GM23248 (cell line): ENCODE measurements at regions of chrX and their contacts with region 1.

Region 1: DNA sequence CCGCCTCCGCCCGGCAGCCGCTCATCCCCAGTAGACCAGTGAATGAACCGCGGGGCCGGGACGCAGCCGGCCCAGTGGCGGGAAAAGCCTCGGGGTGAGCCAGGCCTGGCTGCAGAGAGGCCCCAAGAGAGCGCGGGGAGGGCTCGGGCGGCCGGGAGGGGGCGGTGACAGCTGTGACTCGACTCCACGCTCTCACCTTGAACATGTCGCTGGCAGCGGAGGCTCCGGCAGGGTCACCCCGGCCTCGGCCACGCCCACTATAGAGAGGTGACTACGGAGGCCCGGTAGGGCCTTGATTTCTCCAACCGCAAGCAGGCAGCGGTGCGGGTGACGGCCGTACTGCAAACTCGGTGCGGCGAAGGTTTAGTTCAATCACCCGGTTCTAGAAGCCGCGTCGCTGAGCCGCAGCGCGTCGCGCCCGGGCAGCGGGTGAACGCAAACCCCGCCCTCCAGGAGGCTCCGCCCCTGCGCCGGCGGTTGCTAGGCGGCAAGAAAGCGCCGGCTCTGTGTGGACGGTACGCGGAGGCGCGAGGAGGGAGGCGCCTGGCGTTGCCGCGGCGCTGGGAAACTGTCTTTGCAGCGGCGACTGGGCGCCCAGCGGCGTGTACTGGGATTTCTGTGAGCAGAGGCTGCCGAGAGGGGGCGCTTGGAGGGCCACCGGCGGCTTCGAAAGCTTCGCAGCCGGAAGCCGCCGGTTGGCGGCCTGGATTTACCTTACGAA is at the starts of genes APOO and CXorf58:
- DNase-seq: peak; percentile 95
- H3K4me3 ChIP-seq: peak within 1 kb of the TSS; percentile 90
- H3K27ac ChIP-seq: peak within 1 kb of the TSS; percentile 86
- H3K4me1 ChIP-seq: peaks cover 5% of the 10 kb centered on the region; the same call in 1 of the 2 replicates
- H3K27me3 ChIP-seq: no peaks in the 10 kb centered on the region
- total RNA-seq, gene APOO: 7.3 and 8.6 TPM in 2 replicates
- total RNA-seq, gene CXorf58: not detected in 2 replicates

Region 2: DNA sequence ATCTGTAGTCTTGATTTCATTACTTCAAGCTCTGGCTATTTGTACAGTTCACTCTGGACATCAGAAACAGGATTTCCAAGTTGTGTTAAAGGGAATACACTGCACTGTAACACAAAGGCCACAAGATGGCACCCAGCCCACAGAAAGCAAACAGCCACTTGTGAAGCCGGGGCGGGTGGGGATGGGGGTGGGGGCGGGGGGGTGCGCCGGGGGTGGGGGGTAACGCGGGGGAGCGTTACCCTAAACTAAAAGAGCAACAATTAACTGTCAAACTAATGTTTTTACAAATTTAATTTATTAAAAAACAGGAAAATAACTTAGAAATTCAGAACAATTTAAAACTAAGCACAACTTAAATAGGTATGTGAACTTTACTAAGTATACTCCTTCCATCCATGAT is 213.1 kb before region 1 on chrX:
- in situ Hi-C with region 1: loop called (anchors 10 kb)
- DNase-seq: peak; percentile 71
- H3K4me3 ChIP-seq: no peak overlapping the region
- H3K27ac ChIP-seq: no peak overlapping the region
- H3K4me1 ChIP-seq: no peaks in the 10 kb centered on the region
- H3K27me3 ChIP-seq: no peaks in the 10 kb centered on the region

Region 3: GRCh38 chrX:23782863-23783568 is 124.6 kb before region 1 on chrX and contains the start of gene SAT1:
- in situ Hi-C with region 1: loop called (anchors 10 kb)
- DNase-seq: peak; percentile 97
- H3K4me3 ChIP-seq: peak within 1 kb of the TSS; percentile 87
- H3K27ac ChIP-seq: peak within 1 kb of the TSS; percentile 99
- H3K4me1 ChIP-seq: peaks cover 26% of the 10 kb centered on the region
- H3K27me3 ChIP-seq: no peaks in the 10 kb centered on the region
- total RNA-seq, gene SAT1: 168 and 171 TPM in 2 replicates

Region 4: GRCh38 chrX:24063488-24063887 is 155.8 kb after region 1 on chrX:
- in situ Hi-C with region 1: no loop called
- DNase-seq: no peak
- H3K4me3 ChIP-seq: no peak overlapping the region
- H3K27ac ChIP-seq: no peak overlapping the region
- H3K4me1 ChIP-seq: no peaks in the 10 kb centered on the region
- H3K27me3 ChIP-seq: no peaks in the 10 kb centered on the region

Region 5: DNA sequence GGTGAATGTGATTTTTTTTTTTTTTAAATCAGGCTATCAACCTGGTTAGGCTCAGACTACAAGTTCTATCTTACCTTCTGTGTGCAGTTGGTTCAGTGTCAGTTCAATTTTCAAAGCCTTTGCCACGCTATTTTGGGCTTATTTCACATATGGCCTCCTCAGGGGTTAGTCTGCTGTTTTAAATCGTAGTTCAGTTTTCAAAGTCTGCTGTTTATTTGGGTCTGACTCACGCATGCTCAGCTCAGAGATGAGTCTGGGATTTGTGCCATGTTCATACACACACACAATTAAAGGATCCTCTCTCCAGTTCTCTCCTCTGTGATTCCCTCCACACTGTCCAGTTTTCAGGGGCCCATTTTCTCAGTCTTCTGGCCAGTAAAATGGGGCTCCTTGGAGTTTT is 209.6 kb after region 1 on chrX:
- in situ Hi-C with region 1: no loop called
- DNase-seq: peak; percentile 83
- H3K4me3 ChIP-seq: peak overlapping the region; percentile 60
- H3K27ac ChIP-seq: peak overlapping the region; percentile 74
- H3K4me1 ChIP-seq: peaks cover 16% of the 10 kb centered on the region; the same call in 1 of the 2 replicates
- H3K27me3 ChIP-seq: no peaks in the 10 kb centered on the region